ENCODE measurements at regions of chr11 and their contacts with region 1.

Region 1: GRCh38 chr11:56841210-56841810 is 92.8 kb upstream of the OR9G4 start:
- DNase-seq: no peak
- ATAC-seq: no peak
- H3K4me3 ChIP-seq: no peak overlapping the region
- H3K27ac ChIP-seq: no peak overlapping the region
- H3K4me1 ChIP-seq: no peaks in the 10 kb centered on the region
- H3K27me3 ChIP-seq: no peaks in the 10 kb centered on the region

Region 2: DNA sequence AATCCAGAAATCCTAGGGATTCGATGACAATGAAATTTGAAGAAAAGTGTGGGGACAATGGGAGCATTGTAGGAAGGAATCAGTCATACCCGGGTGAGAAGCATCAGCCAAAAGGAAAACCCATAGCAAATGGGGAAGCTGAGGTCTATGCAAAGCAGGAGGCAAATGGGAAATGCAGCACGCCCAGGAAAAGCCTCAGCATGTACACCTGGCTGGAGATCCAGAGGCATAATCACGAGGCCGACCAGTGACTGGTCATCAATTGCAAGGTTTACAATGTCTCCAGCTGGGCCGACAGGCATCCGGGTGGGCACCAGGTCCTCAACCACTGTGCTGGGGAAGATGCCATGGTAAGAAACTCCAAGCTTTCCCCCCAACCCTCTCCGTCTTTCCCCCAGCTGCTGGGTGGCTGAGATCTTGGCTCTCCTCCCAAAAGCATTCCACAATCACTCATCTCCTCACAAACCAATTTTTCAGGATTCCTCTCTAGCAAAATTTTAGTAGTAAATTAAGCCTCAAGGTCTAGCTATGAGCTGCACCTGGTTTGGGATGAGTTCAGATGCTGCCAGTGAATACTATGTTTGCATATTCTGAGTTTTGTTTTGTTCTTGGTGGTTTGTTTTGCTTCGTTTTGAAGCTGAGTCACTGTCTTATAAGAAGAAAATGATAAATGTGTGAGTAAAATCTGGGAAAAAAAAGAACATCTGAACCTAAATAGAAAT is 49.4 kb after region 1 on chr11:
- intact Hi-C with region 1: loop called in 1 of 2 experiments (anchors 10 kb)
- DNase-seq: no peak
- ATAC-seq: no peak
- H3K4me3 ChIP-seq: no peak overlapping the region
- H3K27ac ChIP-seq: no peak overlapping the region
- H3K4me1 ChIP-seq: no peaks in the 10 kb centered on the region
- H3K27me3 ChIP-seq: no peaks in the 10 kb centered on the region

Region 3: DNA sequence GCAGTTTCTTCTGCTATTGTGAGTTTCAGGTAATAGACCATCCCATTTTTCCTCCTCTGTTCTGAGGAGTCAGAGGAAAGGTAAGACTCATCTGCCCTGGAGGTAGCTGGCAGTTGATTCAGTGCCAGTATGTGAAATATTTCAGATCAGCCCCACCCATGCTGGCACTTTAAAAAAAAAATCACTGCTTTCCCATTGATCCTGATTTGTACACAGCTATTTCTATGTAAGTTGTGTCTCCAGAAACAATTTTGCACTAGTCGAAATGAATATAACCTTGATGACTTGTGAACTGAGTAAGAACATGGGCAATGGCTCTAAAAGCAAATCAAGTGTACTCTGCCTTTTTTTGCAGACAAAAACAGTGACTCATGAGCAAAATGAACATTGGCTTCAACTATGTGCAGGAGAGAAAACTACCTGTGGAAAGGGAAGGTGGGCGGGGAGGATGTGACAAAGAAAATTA is 65.4 kb after region 1 on chr11:
- intact Hi-C with region 1: loop called in 1 of 2 experiments (anchors 10 kb)
- DNase-seq: no peak
- ATAC-seq: no peak
- H3K4me3 ChIP-seq: no peak overlapping the region
- H3K27ac ChIP-seq: no peak overlapping the region
- H3K4me1 ChIP-seq: no peaks in the 10 kb centered on the region
- H3K27me3 ChIP-seq: no peaks in the 10 kb centered on the region

Region 4: GRCh38 chr11:57249384-57250319 is 408.3 kb after region 1 on chr11:
- intact Hi-C with region 1: loop called (anchors 2 to 5 kb)
- DNase-seq: peak; percentile 62 to 89
- ATAC-seq: peak; percentile 83
- H3K4me3 ChIP-seq: no peak overlapping the region
- H3K27ac ChIP-seq: no peak overlapping the region
- H3K4me1 ChIP-seq: no peaks in the 10 kb centered on the region
- H3K27me3 ChIP-seq: no peaks in the 10 kb centered on the region

Region 5: DNA sequence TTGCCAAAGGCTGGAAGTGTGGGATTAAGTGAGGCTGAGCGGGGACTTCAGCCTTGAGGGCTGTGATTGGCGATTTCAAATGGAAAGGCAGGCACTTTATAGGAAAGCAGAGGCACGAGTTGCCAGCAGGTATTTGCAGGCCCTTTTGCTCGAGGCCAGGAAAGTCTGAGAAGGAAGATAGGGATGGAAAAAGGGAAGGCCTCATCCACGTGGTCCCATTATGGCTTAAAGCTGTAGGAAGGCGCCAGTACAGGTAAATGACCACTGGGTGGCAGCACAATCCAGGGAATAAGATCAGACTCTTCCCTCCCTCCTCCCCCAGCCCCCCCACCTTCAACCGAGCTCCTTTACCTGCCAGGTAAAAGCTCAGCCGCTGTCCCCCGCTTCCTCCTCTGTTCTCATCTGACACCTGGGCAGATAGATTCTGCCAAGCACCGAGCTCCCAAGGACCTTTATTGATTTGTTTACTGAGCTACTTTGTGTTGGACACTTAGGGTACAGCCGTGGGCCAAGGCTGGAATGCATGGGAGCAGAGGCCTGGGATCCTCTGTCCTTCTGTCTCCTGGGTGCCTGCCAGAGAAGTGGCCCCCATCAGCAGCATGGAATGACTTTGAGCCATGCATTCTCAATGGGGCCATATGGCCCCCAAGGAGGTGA is 504.4 kb after region 1 on chr11:
- intact Hi-C with region 1: loop called in 1 of 2 experiments (anchors 10 kb)
- DNase-seq: peak; percentile 69 to 81
- ATAC-seq: peak; percentile 74
- H3K4me3 ChIP-seq: no peak overlapping the region
- H3K27ac ChIP-seq: no peak overlapping the region
- H3K4me1 ChIP-seq: no peaks in the 10 kb centered on the region
- H3K27me3 ChIP-seq: no peaks in the 10 kb centered on the region

Measured in aorta (tissue), 5 donors.